ENCODE measurements at regions of chr9 and their contacts with region 1.

Region 1: DNA sequence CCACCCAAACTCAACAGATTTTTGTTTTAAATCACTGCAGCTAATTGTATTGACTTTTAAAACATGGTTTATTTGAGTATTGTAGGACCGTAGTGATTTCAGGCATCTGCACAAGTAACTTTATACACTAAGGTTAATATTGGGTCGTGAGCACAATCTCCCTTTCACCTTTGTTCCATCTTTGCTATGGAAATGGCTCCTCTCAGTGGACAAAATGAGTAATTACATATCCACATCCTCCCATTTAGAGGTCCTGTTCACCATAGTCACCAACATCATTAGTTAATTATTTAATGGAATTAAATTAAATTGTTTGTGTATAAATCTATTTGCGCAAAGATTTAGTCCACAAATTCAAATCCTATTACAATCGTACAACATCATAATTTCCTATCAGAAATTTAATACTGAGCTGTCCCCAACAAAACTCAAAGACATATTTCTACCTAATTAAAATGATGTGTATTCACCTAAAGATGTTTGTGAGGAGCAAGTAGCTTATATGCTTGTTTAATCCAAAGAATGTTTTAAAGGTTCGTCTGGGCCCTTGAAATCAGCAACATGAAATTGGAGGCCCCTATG is 173.0 kb upstream of the DAPK1 start:
- DNase-seq: no peak

Region 2: DNA sequence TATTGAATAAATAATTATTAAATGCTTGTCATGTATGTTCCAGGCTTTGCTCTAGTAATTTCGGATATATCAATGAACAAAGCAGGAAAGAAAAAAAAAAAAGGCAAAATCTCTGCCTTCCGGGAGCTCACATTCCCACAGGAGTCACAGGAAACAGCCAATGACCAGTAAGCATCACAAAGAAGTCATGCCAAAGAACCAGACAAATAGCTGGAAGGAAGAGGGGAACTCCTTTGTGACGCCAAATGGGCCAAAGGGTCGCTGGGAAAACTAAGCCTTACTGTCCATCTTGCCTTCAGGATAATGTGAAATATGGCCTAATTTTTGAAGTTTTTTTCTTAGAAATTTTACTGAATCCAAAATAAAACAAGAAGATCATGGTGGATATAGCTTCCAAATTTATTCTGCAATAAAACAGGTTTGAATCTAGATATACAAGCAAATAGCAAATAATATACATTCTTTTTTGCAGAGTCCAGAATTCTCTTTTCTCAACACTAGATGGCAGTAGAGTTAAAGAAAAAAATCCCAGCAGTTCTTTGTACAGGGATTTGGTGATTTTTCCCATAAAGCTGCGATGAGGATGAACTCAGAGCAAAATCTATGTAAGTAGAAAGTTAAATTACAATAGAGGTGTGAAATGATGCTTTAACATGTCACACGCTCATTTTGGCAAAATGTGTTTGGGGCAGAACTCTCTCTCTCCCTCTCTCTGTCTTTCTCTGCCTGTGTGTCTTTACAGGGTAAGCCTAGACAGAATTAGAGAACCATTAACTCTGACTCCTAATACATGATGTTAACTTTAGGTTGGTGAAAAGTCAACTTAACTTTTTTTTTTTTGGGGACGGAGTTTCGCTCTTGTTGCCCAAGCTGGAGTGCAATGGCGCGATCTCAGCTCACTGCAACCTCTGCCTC is 910.5 kb before region 1 on chr9:
- intact Hi-C with region 1: loop called (anchors 2 kb)
- DNase-seq: no peak

Region 3: GRCh38 chr9:86486891-86487837 is 837.5 kb before region 1 on chr9:
- intact Hi-C with region 1: loop called (anchors 1 kb)
- DNase-seq: no peak

Region 4: GRCh38 chr9:87107072-87107471 is 217.6 kb before region 1 on chr9:
- intact Hi-C with region 1: loop called (anchors 5 kb)
- DNase-seq: peak in 1 of 10 donors; percentile 36

Measured in posterior cingulate gyrus (tissue), 11 donors.